Activated CD8-positive, alpha-beta memory T cell treated with anti-CD3 and anti-CD28 coated beads, Interleukin-2, amount 10 ng/mL, durations not matched to agents 7 days and 5 days (primary cell): ENCODE measurements at regions of chr17 and their contacts with region 1.

Region 1: GRCh38 chr17:59331129-59331928 is at the start of gene YPEL2:
- DNase-seq: peak; percentile 91
- ATAC-seq: peak; percentile 95
- H3K4me3 Mint-ChIP-seq: peak within 1 kb of the TSS; percentile 85
- H3K27ac Mint-ChIP-seq: peak within 1 kb of the TSS; percentile 93
- H3K4me1 Mint-ChIP-seq: peaks cover 48% of the 10 kb centered on the region
- H3K27me3 Mint-ChIP-seq: no peaks in the 10 kb centered on the region
- total RNA-seq, gene YPEL2: 9.9 to 12.3 TPM

Region 2: DNA sequence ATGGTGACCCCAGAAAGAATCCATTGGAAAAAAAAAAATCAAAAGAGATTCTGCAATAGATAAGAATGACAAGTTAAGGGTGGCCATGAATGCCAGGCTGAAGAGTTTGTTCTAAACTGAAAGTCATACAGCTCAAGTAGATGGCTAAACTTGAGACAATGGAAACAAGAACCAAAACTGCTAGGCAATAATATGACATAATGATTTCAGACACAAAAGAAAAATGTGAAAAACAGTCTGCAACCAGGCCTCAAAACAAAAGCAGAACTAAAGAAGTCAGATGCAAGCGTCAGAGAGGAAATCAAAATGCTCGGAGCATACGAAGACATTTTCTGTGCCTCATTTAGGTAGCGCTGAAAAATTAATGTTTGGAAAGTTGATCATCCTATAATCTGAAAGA is 54.3 kb before region 1 on chr17:
- CTCF ChIA-PET with region 1: no interaction called
- DNase-seq: no peak
- ATAC-seq: no peak
- H3K4me3 Mint-ChIP-seq: no peak overlapping the region
- H3K27ac Mint-ChIP-seq: no peak overlapping the region
- H3K4me1 Mint-ChIP-seq: peaks cover 3% of the 10 kb centered on the region
- H3K27me3 Mint-ChIP-seq: no peaks in the 10 kb centered on the region

Region 3: GRCh38 chr17:59311130-59311920 is 20.0 kb before region 1 on chr17:
- CTCF ChIA-PET with region 1: interaction called, 31 read pairs
- DNase-seq: peak; percentile 66
- ATAC-seq: peak; percentile 96
- H3K4me3 Mint-ChIP-seq: no peak overlapping the region
- H3K27ac Mint-ChIP-seq: peak overlapping the region; percentile 25
- H3K4me1 Mint-ChIP-seq: peaks cover 8% of the 10 kb centered on the region
- H3K27me3 Mint-ChIP-seq: no peaks in the 10 kb centered on the region

Region 4: DNA sequence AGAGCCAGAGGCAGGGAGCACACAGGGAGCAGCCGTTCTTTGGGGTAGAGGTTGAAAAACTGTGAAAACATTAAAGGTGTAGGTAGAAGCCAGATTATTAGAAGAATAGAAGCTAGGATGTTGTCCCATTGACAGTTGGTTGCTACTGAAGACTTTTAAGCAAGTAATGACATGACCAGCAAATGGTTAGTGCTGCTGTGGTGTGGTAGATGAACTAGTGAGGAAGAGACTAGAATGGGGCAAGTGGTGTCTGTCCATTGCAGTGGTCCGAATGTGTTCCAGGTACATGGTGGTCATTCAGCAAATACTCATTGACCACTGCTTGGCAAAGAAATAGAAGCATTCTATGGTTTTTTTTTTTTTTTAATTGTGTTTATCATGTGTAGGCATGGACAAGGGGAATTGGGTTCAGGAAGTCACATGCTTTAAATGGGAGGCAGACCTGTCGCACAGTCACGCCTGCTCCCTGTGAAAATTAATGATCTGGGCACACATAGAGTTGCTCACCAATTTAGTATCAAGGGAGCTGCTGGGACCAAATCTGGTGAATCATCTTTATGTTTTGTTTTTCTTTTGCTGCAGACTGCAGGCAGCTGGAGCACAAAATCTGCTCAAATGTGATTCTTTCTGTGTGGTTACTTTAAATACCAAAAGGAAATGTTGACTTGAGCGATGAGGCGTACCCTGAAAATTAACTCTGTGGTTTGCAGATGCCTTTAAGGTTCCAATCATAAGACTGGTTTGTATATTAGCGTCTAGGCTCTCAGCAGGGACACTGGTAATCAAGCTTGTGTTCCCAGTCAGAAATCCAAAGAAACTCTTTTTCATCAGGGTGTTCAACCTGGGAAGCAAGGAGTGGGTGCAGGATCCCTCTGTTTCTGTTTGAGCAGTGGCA is 30.8 kb after region 1 on chr17:
- CTCF ChIA-PET with region 1: interaction called, 14 read pairs
- DNase-seq: peak; percentile 76
- ATAC-seq: peak; percentile 67
- H3K4me3 Mint-ChIP-seq: peak overlapping the region; percentile 58
- H3K27ac Mint-ChIP-seq: peak overlapping the region; percentile 94
- H3K4me1 Mint-ChIP-seq: peaks cover 86% of the 10 kb centered on the region
- H3K27me3 Mint-ChIP-seq: no peaks in the 10 kb centered on the region

Region 5: DNA sequence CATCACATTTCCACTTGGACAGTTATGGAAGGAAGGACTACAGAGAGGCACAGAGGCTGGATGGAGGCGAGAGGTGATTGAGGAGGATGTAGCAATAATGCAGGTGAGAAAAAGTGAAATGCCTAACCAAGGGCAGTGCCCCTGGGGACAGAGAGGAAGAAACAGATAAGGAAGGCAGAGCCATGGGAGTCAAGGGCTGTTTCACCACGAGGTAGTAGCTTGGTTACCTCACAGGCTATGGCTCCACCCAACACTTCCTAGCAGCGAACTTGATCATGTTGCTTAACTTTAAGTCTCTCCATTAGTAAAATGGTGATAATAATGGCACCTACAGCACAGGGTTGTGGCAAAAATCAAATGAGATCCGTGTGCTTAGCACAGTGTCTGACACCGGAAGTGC is 84.1 kb after region 1 on chr17:
- CTCF ChIA-PET with region 1: interaction called, 11 read pairs
- DNase-seq: no peak
- ATAC-seq: no peak
- H3K4me3 Mint-ChIP-seq: no peak overlapping the region
- H3K27ac Mint-ChIP-seq: peak overlapping the region; percentile 81
- H3K4me1 Mint-ChIP-seq: peaks cover 61% of the 10 kb centered on the region
- H3K27me3 Mint-ChIP-seq: no peaks in the 10 kb centered on the region

Region 6: DNA sequence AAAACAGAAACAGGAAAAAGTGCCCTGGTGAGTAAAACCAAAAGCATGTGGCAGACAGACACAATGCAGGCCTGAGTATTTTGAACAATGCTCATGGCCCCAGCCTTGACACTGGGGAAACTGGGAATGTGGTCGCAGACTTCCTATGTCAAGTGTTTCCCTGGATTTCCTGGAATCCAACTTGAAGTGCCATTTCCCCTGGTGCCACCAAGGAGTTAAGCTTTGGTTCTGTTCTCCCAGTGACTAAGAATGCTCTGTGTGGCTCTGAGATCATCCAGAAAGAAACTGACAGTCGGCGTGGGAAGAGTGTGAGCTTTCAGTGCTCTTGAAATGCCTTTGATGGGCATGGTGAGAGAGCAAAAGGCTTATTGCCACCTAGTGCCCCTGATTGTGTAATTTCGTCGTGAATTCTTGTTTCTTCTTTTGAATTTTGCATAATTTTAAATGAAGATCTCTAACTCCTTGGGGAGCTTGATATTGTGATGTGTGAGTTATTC is 96.1 kb after region 1 on chr17:
- CTCF ChIA-PET with region 1: interaction called, 26 read pairs
- DNase-seq: peak; percentile 57
- ATAC-seq: peak; percentile 65
- H3K4me3 Mint-ChIP-seq: no peak overlapping the region
- H3K27ac Mint-ChIP-seq: no peak overlapping the region
- H3K4me1 Mint-ChIP-seq: peaks cover 43% of the 10 kb centered on the region
- H3K27me3 Mint-ChIP-seq: no peaks in the 10 kb centered on the region

Region 7: GRCh38 chr17:59440784-59441441 is 109.6 kb after region 1 on chr17:
- CTCF ChIA-PET with region 1: interaction called, 205 read pairs
- DNase-seq: peak; percentile 95
- ATAC-seq: peak; percentile 99
- H3K4me3 Mint-ChIP-seq: peak overlapping the region; percentile 70
- H3K27ac Mint-ChIP-seq: peak overlapping the region; percentile 91
- H3K4me1 Mint-ChIP-seq: peaks cover 59% of the 10 kb centered on the region
- H3K27me3 Mint-ChIP-seq: no peaks in the 10 kb centered on the region

Region 8: DNA sequence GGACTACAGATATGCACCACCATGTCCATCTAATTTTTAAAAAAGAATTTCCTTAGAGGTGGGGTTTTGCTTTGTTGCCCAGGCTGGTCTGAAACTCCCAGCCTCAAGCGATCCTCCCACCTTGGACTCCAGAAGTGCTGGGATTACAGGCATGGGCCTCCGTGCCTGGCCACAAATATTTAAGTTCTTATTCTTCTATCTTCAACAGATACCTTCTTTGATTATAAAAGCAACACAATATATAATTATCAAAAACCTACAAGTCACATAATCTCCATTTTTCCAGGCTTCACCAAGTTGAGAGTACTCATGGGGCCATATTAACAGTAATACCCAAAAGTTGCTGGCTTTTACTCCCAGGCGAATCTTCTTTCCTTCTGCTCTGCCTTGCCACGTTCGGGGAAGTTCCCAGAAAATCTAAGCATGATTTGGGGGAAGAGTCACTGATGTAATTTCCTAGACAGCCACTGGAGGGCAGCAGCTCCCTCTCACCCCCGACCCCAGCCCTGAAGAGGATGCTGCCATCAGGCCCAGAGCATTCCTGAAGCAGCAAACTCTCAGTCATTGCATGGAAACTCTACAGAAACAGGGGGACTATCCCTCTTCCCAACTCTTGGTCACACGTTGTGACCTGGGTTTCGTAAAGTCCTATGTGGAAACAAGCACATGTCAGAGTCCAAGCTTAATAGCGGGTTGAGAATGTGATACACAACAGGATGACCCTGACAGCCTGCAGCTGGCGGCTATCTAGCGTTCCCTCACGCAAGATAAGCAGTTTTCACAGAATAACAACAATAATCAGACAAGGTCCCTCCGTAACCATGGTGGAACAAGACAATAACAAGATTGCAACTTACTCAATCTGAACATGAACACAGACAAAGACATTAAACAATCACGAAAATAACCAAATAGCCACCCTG is 190.1 kb after region 1 on chr17:
- CTCF ChIA-PET with region 1: interaction called, 11 read pairs
- DNase-seq: peak; percentile 64
- ATAC-seq: peak; percentile 57
- H3K4me3 Mint-ChIP-seq: no peak overlapping the region
- H3K27ac Mint-ChIP-seq: no peak overlapping the region
- H3K4me1 Mint-ChIP-seq: peaks cover 6% of the 10 kb centered on the region
- H3K27me3 Mint-ChIP-seq: peaks cover 32% of the 10 kb centered on the region